Prostate gland (tissue), 2 donors: ENCODE measurements at regions of chr9 and their contacts with region 1.

Region 1: DNA sequence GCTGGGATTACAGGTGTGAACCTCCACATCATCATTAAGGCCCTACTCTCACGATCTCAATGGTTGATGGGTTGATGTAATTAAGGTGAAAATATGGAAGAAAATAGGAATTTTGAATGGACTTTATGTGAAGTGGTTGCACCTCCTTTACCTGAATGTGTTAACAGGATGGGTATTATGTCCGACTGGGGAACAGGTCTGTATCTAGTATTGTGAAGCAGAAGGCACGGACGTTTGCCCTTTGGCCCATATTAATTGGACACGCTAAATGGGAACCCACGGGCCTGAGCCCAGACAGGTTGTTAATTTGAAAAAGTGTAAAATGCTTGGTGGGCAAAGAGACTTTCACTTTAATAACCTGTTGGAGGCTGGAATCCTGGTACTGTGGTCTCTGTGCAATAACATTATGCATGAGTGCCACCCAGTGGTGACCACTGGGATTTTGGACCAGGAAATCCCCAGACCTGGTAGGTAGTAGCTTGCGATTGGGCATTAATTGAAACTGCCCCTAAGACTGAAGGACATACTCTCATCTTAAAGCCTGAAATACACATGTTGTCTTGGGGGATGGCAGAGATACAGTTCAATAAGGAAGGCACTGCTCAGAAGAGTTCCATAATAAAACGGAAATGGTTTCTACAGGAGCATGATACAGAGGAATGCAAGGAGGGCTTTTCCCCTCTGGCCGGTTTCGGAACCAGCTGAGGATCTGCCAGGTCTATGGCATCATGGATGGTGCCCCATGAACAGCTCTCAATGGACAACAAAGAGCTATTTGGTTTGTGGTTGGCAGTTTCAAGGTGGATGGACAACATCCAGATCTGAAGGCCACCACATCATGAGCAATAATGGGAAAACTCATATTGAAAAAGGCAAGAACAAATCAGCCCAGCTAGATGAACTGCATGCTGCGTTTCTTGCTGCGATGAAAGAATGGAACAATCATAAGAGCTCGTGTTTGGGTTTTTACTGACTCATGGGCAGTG is 26.2 kb upstream of the BICD2 start:
- DNase-seq: peak; percentile 77
- H3K4me3 ChIP-seq: no peak overlapping the region
- H3K27ac ChIP-seq: no peak overlapping the region
- H3K4me1 ChIP-seq: no peaks in the 10 kb centered on the region
- H3K27me3 ChIP-seq: no peaks in the 10 kb centered on the region
- CTCF ChIP-seq: peak; percentile 61 to 90 (median 82)
- POLR2A ChIP-seq: no peak

Region 2: GRCh38 chr9:92325269-92325990 is 465.4 kb before region 1 on chr9 and contains the starts of genes CENPP and NOL8:
- intact Hi-C with region 1: no loop called
- DNase-seq: peak; percentile 86
- H3K4me3 ChIP-seq: peak within 1 kb of the TSS; percentile 73 to 82
- H3K27ac ChIP-seq: peak within 1 kb of the TSS; percentile 89 to 94
- H3K4me1 ChIP-seq: peaks cover 8% of the 10 kb centered on the region
- H3K27me3 ChIP-seq: no peaks in the 10 kb centered on the region
- CTCF ChIP-seq: no peak
- POLR2A ChIP-seq: peak; percentile 20
- total RNA-seq, gene CENPP: 1.4 to 21.5 TPM
- total RNA-seq, gene NOL8: 23.8 to 26.6 TPM

Region 3: DNA sequence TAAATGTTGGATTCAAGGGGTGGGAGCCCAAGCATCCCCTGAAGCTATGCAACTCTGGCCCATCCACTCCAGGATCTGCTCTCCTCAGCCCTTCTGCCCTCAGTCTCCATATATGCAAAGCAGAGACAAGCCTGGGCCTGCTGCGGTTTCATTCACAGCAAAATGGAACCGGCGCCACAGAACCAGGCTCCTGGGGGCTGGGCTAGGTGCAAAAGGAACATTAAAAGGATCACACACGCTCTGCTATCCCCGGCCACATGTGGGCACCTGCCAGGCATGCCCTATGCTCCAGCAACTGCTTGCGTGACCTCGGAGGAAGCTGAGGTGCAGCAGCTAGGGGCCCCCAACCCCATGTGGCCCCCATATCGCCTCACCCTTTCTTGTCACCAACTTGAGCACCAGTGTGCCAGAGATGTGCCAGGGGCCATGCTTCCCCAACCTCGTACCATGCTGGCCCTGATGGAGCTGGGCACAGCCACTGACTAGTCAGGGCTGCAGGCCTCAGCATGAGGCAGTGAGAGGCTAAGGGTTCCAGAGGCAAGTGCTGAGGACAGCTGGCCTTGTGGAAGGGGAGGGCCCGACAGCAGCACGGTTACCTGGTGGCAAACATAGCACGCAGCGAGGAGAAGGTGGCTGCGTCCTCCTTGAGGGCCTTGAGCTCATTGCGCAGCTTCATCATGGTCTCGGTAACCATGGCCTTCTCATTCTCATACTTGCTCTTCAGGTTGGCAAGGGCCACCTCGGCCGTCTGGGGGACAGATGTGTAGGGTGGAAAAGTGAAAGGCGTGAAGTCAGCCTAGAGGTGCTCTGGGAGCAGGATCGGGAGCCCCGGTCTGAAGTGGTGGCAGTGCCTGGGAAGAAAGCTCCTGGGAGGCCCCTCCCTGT is 73.4 kb before region 1 on chr9:
- intact Hi-C with region 1: loop called (anchors 1 kb)
- DNase-seq: no peak
- H3K4me3 ChIP-seq: no peak overlapping the region
- H3K27ac ChIP-seq: no peak overlapping the region
- H3K4me1 ChIP-seq: no peaks in the 10 kb centered on the region
- H3K27me3 ChIP-seq: no peaks in the 10 kb centered on the region
- CTCF ChIP-seq: no peak
- POLR2A ChIP-seq: no peak